Stomach (tissue), 19 donors: ENCODE measurements at regions of chr9 and their contacts with region 1.

Region 1: DNA sequence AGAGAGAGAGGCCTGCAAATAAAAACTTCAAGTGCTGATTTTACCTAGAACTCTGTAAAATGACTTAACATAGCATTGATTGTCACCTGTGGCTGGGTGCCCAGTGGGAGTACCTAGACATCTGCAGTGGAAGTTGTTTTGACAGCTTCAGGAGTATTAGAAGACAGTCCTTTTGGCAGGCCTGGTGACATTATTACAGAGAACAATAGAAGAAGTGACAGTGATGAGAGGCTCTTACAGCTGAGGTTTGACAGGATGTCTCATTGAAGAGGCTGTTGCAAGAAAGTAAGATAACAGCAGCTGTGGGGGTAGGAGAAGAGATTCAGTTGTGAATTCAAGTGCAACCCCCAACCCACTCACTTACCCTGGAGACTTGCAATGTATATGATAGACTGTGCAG is 27.9 kb upstream of the MUSK start:
- DNase-seq: no peak
- H3K4me3 ChIP-seq: no peak overlapping the region
- H3K27ac ChIP-seq: no peak overlapping the region
- H3K4me1 ChIP-seq: no peaks in the 10 kb centered on the region
- H3K27me3 ChIP-seq: no peaks in the 10 kb centered on the region
- CTCF ChIP-seq: no peak
- EP300 ChIP-seq: no peak
- POLR2A ChIP-seq: no peak

Region 2: DNA sequence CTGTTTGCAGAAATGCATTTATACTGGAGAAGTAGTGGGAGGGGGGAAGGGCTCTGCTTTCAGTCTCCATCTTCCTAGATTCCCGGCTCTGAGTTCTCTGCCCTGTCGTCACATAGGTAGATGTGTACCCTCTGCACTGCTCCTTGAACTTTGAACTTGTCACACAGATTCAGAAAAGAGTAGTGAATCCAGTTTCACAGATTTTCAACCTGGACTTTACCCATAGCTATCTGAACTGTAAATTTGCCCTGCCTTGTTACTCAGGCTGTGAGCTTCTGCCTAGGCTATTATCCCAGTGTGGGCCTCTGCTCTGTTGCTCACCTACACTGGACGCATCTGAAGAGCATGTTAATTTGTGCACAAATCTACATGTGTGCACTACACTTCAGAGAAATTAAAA is 419.9 kb before region 1 on chr9:
- intact Hi-C with region 1: no loop called
- DNase-seq: peak in 1 of 2 donors; percentile 74
- H3K4me3 ChIP-seq: no peak overlapping the region
- H3K27ac ChIP-seq: no peak overlapping the region
- H3K4me1 ChIP-seq: peaks cover under 1 to 26% (median 8%) of the 10 kb centered on the region in 4 donors
- H3K27me3 ChIP-seq: no peaks in the 10 kb centered on the region
- CTCF ChIP-seq: no peak
- EP300 ChIP-seq: no peak
- POLR2A ChIP-seq: no peak

Region 3: GRCh38 chr9:111298731-111299598 is 658.2 kb after region 1 on chr9:
- intact Hi-C with region 1: loop called (anchors 5 kb)
- DNase-seq: peak in 1 of 2 donors; percentile 85
- H3K4me3 ChIP-seq: peak overlapping the region in 2 of 4 donors; percentile 2 to 19
- H3K27ac ChIP-seq: peak overlapping the region in 3 of 5 donors; percentile 15 to 47 (median 47)
- H3K4me1 ChIP-seq: peaks cover 0 to 14% (median 6%) of the 10 kb centered on the region in 4 donors
- H3K27me3 ChIP-seq: no peaks in the 10 kb centered on the region
- CTCF ChIP-seq: peak in 5 of 7 experiments; percentile 62 to 87 (median 82)
- EP300 ChIP-seq: no peak
- POLR2A ChIP-seq: no peak